Activated CD4-positive, alpha-beta T cell treated with anti-CD3 and anti-CD28 coated beads for 36 hours (primary cell): ENCODE measurements at regions of chr14 and their contacts with region 1.

Region 1: DNA sequence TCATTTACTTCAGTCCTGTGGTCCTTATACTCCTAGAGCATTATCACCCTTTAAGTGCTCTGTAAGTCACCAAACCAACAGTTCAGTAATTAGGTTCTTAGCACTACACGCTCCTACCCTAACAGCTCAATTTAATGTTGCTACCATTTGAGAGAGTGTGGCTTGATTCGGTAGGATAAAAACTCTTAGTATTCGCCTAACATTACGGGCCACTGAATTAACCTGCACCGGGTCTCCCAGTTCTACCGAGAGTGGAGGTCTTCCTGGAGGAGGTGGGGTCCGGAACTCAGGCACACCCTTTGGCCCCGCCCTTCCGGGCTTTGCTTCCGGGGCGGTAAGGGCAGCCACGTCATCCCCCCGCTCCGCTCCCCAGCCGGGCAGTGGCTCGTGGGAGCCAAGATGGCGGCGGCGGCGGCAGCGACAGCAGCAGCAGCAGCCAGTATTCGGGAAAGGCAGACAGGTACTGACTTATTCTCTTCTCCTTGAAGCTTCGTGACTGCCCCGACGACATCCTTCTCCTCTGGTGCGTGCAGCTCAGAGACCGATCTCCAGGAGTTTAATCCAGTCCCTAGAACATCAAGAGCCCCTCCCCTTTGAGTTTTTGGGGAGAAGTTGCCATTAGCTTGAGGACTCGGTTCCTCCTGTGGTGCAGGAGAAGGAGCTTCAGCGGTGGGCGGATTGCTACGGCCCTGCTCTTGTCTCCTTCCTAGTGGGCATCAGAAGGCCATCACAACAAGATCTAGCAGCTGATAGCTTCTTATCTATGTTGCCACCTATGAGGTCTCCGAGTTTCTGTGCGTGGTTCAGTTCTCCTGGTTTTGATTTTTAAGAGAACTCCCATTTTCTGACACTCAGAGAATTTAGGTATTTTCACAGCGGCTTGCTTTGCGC is at the start of gene SCFD1:
- DNase-seq: peak; percentile 97
- ATAC-seq: peak; percentile 98
- H3K4me3 Mint-ChIP-seq: peak within 1 kb of the TSS; percentile 78
- H3K27ac Mint-ChIP-seq: peak within 1 kb of the TSS; percentile 90
- H3K4me1 Mint-ChIP-seq: peaks cover 39% of the 10 kb centered on the region
- H3K27me3 Mint-ChIP-seq: no peaks in the 10 kb centered on the region
- total RNA-seq, gene SCFD1: 47.5 to 55.3 TPM

Region 2: GRCh38 chr14:30558675-30559555 is 63.3 kb before region 1 on chr14 and contains the start of gene G2E3:
- CTCF ChIA-PET with region 1: interaction called, 3 read pairs
- POLR2A ChIA-PET with region 1: no interaction called
- intact Hi-C with region 1: loop called (anchors 1 kb)
- DNase-seq: peak; percentile 93
- ATAC-seq: peak; percentile 99
- H3K4me3 Mint-ChIP-seq: peak within 1 kb of the TSS; percentile 100
- H3K27ac Mint-ChIP-seq: peak within 1 kb of the TSS; percentile 100
- H3K4me1 Mint-ChIP-seq: peaks cover 33% of the 10 kb centered on the region
- H3K27me3 Mint-ChIP-seq: peaks cover 2% of the 10 kb centered on the region
- total RNA-seq, gene G2E3: 16.9 to 29.6 TPM

Region 3: GRCh38 chr14:31026395-31027118 is 404.4 kb after region 1 on chr14:
- CTCF ChIA-PET with region 1: no interaction called
- POLR2A ChIA-PET with region 1: no interaction called
- intact Hi-C with region 1: loop called (anchors 1 to 5 kb)
- DNase-seq: peak; percentile 95
- ATAC-seq: peak; percentile 91
- H3K4me3 Mint-ChIP-seq: peak overlapping the region; percentile 83
- H3K27ac Mint-ChIP-seq: peak overlapping the region; percentile 90
- H3K4me1 Mint-ChIP-seq: peaks cover 55% of the 10 kb centered on the region
- H3K27me3 Mint-ChIP-seq: no peaks in the 10 kb centered on the region

Region 4: GRCh38 chr14:31159682-31160296 is 537.6 kb after region 1 on chr14:
- CTCF ChIA-PET with region 1: no interaction called
- POLR2A ChIA-PET with region 1: no interaction called
- intact Hi-C with region 1: no loop called
- DNase-seq: no peak
- ATAC-seq: no peak
- H3K4me3 Mint-ChIP-seq: no peak overlapping the region
- H3K27ac Mint-ChIP-seq: no peak overlapping the region
- H3K4me1 Mint-ChIP-seq: no peaks in the 10 kb centered on the region
- H3K27me3 Mint-ChIP-seq: no peaks in the 10 kb centered on the region

Region 5: DNA sequence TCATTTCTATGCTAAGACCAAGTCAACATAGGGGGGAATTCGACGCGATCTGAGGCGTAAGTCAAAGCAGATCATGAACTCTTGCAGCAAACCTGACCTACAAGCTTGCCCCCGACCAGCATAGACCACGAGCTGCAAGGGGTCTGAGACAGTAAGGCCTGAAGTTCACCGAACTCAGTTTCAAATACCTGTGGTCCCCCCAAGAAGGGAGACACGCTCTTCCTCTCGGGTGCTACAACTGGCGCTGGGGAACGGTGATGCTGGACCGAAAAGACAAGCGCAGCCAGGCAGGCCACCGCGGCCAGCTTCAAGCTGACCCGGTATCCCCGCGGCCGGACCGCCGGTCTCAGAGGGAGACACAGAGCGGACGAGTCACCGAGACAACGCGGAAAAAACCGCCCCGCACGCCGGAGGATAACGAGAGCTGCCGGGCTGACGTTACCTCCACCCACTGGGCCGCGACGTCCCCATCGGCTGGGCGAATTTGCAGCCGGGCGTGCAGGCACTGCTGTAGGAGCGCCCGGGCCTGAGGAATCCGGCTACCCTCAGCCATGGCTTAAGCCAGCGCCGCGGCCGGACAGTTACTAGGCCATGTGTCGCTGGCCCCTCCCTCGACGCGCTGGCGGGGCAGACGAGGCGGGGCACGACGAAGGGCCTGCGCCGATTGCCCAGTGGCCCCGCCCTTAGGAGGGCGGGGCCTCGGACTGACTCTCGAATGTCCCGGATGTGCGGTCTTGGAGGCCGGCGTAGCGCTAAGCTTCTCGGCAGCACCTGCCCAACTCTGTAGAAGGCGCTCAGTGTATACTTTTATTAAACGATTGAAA is 834.9 kb after region 1 on chr14 and contains the start of gene DTD2:
- CTCF ChIA-PET with region 1: no interaction called
- POLR2A ChIA-PET with region 1: no interaction called
- intact Hi-C with region 1: loop called in 1 of 2 experiments (anchors 5 kb)
- DNase-seq: peak; percentile 95
- ATAC-seq: peak; percentile 99
- H3K4me3 Mint-ChIP-seq: peak within 1 kb of the TSS; percentile 98
- H3K27ac Mint-ChIP-seq: peak within 1 kb of the TSS; percentile 95
- H3K4me1 Mint-ChIP-seq: peaks cover 22% of the 10 kb centered on the region
- H3K27me3 Mint-ChIP-seq: peaks cover 2% of the 10 kb centered on the region
- total RNA-seq, gene DTD2: 17.5 to 21.6 TPM

Region 6: GRCh38 chr14:31561155-31561846 is 939.1 kb after region 1 on chr14 and contains the start of gene NUBPL:
- CTCF ChIA-PET with region 1: no interaction called
- POLR2A ChIA-PET with region 1: no interaction called
- intact Hi-C with region 1: loop called in 1 of 2 experiments (anchors 10 kb)
- DNase-seq: peak; percentile 98
- ATAC-seq: peak; percentile 96
- H3K4me3 Mint-ChIP-seq: peak within 1 kb of the TSS; percentile 92
- H3K27ac Mint-ChIP-seq: peak within 1 kb of the TSS; percentile 95
- H3K4me1 Mint-ChIP-seq: peaks cover 23% of the 10 kb centered on the region
- H3K27me3 Mint-ChIP-seq: peaks cover 6% of the 10 kb centered on the region
- total RNA-seq, gene NUBPL: 9.5 to 14.9 TPM